Activated T-helper 2 cell treated with anti-CD3 and anti-CD28 coated beads, Interferon-gamma antibody, Interleukin-2, Interleukin-4, amounts not matched to agents 10 μg/mL and 5 μg/mL and 100 μg/mL, durations not matched to agents 14 hours and 24 hours and 36 hours (primary cell): ENCODE measurements at regions of chr17 and their contacts with region 1.

Region 1: DNA sequence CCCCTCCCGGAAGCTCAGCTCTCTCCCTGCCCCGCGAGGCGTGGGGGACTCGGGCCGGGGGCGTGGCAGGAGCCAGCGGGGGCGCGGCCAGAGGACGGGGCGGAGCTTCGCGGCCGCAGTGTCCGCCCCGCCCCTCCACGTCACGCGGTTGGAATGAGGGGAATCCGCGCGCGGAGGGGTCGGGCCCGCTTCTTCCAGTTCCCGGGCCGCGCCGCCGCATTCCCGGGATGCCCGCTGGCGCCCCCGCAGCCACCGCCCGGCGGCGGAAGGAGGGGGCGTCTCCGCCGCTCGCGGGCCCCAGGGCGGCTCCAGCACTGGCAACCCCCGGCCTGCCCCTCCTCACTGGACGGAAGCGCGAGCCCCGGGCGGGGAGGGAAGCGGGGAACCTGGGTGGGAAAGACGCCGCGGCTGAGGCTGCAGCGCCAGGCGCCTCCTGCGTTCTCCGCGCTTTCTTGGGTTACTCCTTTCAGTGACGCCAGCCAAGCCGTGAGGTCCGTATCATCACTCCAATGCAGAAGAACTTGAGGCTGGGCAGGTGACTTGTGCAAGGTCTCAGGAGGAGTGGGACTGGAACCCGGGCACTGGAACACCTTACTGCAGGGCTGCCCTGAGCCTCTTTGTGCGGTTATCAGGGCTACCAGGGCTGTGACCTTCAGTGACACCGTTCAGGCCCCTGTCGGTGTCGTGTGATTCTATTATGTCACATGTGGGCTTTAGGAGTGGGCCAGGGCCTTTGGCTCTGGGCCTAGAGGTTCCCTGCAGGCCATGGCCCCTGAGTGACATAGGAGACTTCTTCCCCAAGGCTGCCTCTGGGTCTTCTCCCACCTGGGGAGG is 4.2 kb downstream of the MYO1C start:
- DNase-seq: peak; percentile 54
- H3K4me3 Mint-ChIP-seq: peak overlapping the region; percentile 84
- H3K27ac Mint-ChIP-seq: no peak overlapping the region
- H3K4me1 Mint-ChIP-seq: peaks cover 23% of the 10 kb centered on the region
- H3K27me3 Mint-ChIP-seq: no peaks in the 10 kb centered on the region

Region 2: DNA sequence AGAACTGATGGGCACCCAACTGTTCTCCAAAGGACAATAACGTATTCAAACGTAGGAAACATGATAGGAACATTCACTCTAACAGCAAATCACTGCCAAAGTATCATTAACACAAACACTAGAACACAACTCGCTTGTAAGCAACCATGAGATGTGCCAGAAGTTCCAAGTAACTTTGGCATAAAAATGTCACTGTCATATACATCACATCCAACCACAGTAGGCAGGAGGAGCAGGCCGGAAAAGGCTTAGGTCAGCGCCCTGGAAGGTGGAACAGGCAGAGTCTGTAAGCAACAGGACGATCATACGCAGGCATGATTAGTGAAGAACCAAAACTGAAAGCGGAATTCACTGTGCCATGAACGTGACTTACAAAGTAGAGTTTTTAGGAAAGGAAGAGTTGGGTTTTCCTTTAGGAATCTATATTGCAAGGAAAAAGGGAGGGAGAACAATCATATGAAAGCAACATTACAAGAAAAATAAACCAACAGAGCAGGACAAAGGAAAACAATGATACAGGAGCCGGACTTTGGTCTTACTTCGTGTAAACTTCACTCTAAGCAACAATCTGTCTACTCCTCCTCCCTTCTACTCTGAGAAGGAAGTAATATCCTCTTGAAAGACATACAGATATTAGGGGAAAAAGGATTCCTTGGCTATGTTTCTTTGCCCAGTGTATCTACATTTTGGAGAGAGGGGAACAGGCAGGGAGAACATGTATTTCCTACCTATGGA is 140.5 kb before region 1 on chr17:
- intact Hi-C with region 1: no loop called
- DNase-seq: no peak
- H3K4me3 Mint-ChIP-seq: no peak overlapping the region
- H3K27ac Mint-ChIP-seq: no peak overlapping the region
- H3K4me1 Mint-ChIP-seq: peaks cover 14% of the 10 kb centered on the region
- H3K27me3 Mint-ChIP-seq: no peaks in the 10 kb centered on the region

Region 3: GRCh38 chr17:1399679-1400512 is 88.4 kb before region 1 on chr17 and contains the start of gene YWHAE:
- intact Hi-C with region 1: loop called (anchors 1 kb)
- DNase-seq: peak; percentile 95
- H3K4me3 Mint-ChIP-seq: peak within 1 kb of the TSS; percentile 98
- H3K27ac Mint-ChIP-seq: peak within 1 kb of the TSS; percentile 100
- H3K4me1 Mint-ChIP-seq: peaks cover 19% of the 10 kb centered on the region
- H3K27me3 Mint-ChIP-seq: peaks cover 2% of the 10 kb centered on the region
- total RNA-seq, gene YWHAE: 499 and 501 TPM in 2 replicates

Region 4: GRCh38 chr17:1462287-1463112 is 25.7 kb before region 1 on chr17:
- intact Hi-C with region 1: loop called (anchors 2 kb)
- DNase-seq: no peak
- H3K4me3 Mint-ChIP-seq: no peak overlapping the region
- H3K27ac Mint-ChIP-seq: peak overlapping the region; percentile 78
- H3K4me1 Mint-ChIP-seq: peaks cover 19% of the 10 kb centered on the region
- H3K27me3 Mint-ChIP-seq: peaks cover 25% of the 10 kb centered on the region